ENCODE measurements at regions of chr2 and their contacts with region 1.

Region 1: DNA sequence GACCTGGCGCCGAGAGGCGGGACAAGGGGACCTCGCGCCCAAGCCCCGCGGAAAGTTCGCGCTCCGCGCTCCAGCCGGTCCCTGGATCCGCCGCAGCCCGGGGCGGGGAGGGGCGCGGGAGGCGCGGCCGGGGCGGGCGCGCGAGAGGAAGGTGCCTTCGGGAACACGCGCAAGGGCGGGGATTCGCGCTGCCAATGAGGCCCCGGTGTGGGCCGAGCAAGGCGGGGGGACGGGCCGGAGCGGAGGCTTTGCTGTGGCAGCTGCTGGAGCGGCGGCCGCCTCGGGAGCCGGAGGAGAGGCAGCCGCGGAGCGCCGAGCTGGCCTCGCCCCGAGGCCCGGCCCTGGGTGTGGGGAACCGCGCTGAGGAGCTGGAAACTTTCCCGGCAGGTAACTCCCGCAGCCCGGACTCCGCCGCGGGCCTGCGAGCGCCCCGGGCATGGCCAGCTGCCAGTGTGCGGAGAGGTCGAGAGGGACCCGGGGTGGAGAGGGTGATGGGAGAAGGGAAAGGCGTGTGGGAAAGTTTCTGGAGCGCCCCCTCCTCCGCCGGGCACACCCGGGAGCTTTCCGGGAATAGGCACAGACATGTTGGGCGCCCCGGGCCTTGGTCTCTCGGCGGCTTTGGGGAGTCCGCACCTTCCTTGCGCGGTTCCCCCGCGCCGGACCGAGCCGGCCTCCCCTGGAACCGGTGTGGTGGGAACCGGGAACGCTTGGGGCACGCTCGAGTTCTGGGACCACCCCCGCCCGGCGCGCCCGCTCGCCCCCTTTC is at the start of gene TANC1:
- H3K4me3 ChIP-seq: peak within 1 kb of the TSS; percentile 94
- H3K27ac ChIP-seq: peak within 1 kb of the TSS; percentile 99
- H3K4me1 ChIP-seq: peaks cover 43% of the 10 kb centered on the region
- CTCF ChIP-seq: peak; percentile 73

Region 2: GRCh38 chr2:158923180-158923594 is 45.4 kb before region 1 on chr2:
- CTCF ChIA-PET with region 1: no interaction called
- POLR2A ChIA-PET with region 1: interaction called, 15 read pairs
- H3K4me3 ChIP-seq: no peak overlapping the region
- H3K27ac ChIP-seq: peak overlapping the region; percentile 55
- H3K4me1 ChIP-seq: peaks cover 11% of the 10 kb centered on the region
- CTCF ChIP-seq: no peak

Region 3: GRCh38 chr2:158953926-158954763 is 14.4 kb before region 1 on chr2:
- CTCF ChIA-PET with region 1: interaction called, 6 read pairs
- POLR2A ChIA-PET with region 1: interaction called, 57 read pairs
- H3K4me3 ChIP-seq: peak overlapping the region; percentile 11; the same call in 1 of the 2 replicates
- H3K27ac ChIP-seq: peak overlapping the region; percentile 92
- H3K4me1 ChIP-seq: peaks cover 11% of the 10 kb centered on the region
- CTCF ChIP-seq: no peak

Region 4: GRCh38 chr2:159003545-159003944 is 35.0 kb after region 1 on chr2:
- CTCF ChIA-PET with region 1: no interaction called
- POLR2A ChIA-PET with region 1: no interaction called
- H3K4me3 ChIP-seq: no peak overlapping the region
- H3K27ac ChIP-seq: no peak overlapping the region
- H3K4me1 ChIP-seq: peaks cover 25% of the 10 kb centered on the region
- CTCF ChIP-seq: no peak

Region 5: DNA sequence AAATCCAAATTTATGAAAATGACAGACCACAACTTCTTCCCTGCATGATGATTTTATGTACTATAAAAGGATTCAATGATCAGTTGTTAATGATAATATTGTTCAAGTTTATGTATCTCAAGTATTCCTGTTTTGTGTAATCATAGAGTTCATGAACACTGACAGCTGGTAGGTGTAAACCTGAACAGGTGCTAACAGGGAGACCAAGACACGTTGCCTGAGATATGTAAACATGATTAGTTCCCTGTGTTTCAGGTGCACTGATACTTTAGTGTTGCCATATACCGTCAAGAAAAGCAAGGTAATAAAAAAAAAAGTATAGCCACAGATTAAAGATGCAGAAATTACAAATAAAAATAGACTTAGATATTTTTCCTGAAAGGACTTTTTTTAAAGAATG is 516.0 kb after region 1 on chr2:
- CTCF ChIA-PET with region 1: no interaction called
- POLR2A ChIA-PET with region 1: no interaction called
- H3K4me3 ChIP-seq: no peak overlapping the region
- H3K27ac ChIP-seq: no peak overlapping the region
- H3K4me1 ChIP-seq: no peaks in the 10 kb centered on the region
- CTCF ChIP-seq: no peak